GM10248 (cell line): ENCODE measurements at regions of chr18 and their contacts with region 1.

Region 1: DNA sequence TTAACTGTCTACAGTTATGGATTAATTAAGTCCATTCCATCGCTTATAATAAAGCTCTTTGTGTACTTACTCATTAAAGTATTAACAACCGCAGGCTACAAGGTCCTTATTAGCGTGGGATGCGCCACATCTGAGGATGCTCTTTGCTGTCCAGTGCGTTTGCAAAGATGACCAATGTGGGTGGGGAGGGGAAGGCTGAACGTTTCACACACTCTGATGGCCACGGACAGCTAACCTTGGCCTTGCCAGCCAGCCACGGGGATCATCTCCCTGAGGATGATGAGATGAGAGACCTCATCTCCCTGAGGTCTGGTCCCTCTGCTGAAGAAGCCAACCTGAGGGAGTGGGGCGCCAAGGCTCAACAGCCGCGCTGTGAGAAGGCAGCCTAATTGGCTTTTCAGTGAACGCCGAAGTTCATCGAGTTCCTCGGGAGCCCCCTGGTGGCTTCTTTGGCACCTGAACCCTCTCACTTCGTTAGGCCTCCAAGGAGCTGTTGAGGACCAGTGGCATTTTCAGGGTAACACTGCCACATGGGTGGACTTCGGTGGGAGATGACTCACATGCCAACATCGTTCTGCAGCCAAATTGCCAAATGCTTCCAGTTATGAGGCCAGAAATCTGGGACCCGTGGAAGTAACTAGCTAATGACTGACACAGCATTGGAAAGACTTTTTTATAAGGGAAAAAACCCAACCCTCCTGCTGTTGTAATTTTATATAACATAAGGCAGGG is 69.3 kb upstream of the SEC11C start:
- DNase-seq: peak; percentile 76
- CTCF ChIP-seq: peak; percentile 93

Region 2: GRCh38 chr18:58761241-58761969 is 308.9 kb before region 1 on chr18:
- CTCF ChIA-PET with region 1: interaction called, 371 read pairs
- POLR2A ChIA-PET with region 1: no interaction called
- DNase-seq: peak; percentile 71
- CTCF ChIP-seq: no peak

Region 3: GRCh38 chr18:58792086-58792485 is 278.3 kb before region 1 on chr18:
- CTCF ChIA-PET with region 1: interaction called, 18 read pairs
- POLR2A ChIA-PET with region 1: no interaction called
- DNase-seq: peak; percentile 71
- CTCF ChIP-seq: no peak

Region 4: DNA sequence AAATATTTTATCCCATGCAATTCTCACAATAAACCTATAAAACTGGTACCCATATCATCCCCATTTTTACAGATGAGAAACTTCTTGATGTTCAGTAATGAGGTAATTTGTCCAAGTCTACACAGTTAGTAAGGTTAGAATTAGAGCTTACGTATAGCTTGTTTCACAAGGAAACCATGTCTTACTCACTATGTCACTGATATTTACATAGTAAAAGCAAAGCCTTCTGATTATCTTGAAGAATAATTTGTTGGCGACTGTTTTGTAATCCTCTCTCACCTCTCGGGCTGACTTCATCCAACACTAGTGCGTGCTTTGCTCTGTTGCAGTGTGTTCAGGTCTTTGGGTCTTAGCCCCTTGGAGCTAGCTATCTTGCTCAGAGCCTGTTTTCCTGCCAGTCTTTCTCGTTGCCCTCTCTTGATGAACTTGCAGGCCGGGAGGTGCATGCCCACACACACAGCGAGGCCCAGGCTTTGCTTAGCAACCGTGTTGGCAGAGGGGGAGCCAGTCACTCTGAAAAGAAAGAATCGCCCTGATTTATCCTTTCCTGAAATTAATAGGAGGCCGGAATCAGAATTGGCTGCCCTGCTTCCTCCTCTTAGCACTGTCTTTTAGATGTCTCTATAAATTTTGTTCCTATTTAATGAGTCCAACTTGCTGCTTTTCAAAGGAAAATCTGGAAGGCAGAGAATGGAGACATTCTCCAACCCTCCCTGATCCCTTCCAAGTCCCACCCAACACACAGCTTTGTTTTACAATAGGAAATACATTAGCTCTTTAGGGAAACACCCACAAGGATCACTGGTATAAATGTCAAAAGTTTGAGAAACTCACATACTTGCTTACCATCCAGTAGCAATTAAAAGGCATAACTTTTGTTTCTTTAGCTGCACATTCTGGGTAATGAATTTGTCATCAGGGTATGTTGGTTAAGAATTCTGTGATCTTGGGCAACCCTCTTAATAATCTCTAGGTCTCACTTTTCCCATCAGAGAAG is 28.2 kb before region 1 on chr18:
- CTCF ChIA-PET with region 1: interaction called, 12 read pairs
- POLR2A ChIA-PET with region 1: no interaction called
- DNase-seq: no peak
- CTCF ChIP-seq: no peak

Region 5: GRCh38 chr18:59057969-59058368 is 12.4 kb before region 1 on chr18:
- CTCF ChIA-PET with region 1: interaction called, 41 read pairs
- POLR2A ChIA-PET with region 1: no interaction called
- DNase-seq: no peak
- CTCF ChIP-seq: no peak

Region 6: DNA sequence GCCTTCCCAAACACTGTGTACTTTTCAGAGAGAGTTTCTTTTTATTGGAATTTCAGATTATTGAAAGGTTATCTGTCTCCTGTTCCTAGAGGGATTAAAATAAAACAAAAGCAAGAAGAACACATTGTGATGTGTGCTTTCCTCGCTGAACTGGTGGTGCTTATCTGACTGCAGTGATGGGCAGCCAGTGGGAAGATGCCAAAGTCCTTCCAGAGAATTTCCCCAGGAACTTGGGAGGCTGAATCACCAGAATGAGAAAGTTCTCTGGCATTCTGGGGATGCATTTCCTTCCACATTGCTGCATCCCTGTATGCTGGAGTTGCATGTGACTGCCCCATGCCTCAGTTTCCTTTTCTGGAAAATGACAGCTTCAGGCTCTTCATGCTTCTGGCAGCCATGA is 15.4 kb after region 1 on chr18:
- CTCF ChIA-PET with region 1: interaction called, 82 read pairs
- POLR2A ChIA-PET with region 1: no interaction called
- DNase-seq: no peak
- CTCF ChIP-seq: no peak